ENCODE measurements at regions of chr6 and their contacts with region 1.

Region 1: DNA sequence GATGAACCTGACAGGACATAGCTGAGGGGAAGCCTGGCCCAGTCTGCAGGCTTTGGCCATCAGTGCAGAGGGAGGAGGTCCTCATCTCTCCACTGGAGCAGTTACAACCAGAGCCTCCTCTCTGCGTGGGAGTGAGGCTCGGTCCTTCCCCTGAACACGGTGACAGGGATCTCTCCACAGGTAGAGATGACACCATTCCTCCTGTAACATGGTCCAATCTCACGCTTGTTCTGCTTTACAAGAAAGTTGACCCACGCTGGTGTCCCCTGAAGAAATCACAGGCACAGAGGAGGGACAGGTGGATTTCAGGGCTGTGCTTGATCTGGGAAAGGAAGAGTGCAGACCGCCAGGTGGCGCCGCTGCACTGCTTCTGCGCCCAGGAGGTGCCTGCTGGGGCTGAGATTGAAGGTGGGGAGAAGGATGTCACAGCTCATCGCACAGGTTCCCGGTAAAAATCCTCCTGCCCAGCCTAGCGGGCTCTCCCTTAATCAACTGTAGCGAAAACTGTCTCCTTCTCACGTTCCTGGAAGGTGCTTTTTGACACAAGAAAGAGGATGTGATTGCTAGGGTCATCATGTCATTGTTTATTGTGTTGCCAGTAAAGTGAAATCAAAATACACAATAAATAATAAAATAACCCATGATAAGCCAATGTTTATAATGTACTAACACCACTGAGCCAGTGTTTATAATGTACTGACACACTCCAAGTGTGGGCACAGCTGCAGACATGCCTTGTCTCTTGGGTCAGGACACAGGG is 20.4 kb downstream of the HLA-G start:
- DNase-seq: peak; percentile 76
- ATAC-seq: peak; percentile 84
- H3K4me3 Mint-ChIP-seq: no peak overlapping the region
- H3K27ac Mint-ChIP-seq: peak overlapping the region; percentile 35
- H3K4me1 Mint-ChIP-seq: peaks cover 8% of the 10 kb centered on the region
- H3K27me3 Mint-ChIP-seq: peaks cover 50% of the 10 kb centered on the region
- CTCF ChIP-seq: peak; percentile 67

Region 2: DNA sequence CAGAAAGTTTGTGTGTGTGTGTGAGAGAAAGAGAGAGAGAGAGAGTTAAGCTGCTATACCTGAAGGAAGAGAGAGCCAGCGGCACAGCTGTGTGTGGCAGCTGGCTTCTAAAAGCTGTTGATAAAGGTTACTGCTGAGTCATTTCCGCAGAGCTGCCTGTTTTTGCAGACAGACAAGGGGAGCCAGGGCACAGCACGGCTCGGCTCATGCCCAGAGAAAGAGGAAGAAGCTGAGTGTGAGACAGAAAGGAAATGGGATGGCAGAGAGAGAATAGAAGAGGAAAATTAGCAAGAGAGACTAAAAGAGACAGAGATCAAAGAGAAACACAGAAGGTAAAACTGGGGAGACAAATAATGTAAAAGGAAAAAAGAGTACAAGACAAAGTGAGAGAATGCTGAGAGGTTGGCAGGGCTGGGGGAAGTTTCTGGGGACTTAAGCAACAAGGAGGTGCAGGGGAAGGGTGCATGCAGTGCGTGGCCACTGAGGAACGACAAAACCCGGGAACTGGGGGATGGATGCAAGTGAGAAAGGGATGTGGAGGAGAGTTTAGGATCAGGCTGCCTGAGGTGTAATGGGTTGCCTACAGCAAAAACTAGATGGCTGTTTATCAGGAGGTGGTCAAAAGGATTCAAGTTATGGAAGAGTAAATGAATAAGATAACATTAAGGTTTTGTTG is 117.0 kb after region 1 on chr6:
- CTCF ChIA-PET with region 1: interaction called, 44 read pairs
- POLR2A ChIA-PET with region 1: interaction called, 5 read pairs
- intact Hi-C with region 1: loop called (anchors 1 kb)
- DNase-seq: peak; percentile 53
- ATAC-seq: peak; percentile 97
- H3K4me3 Mint-ChIP-seq: peak overlapping the region; percentile 82
- H3K27ac Mint-ChIP-seq: peak overlapping the region; percentile 92
- H3K4me1 Mint-ChIP-seq: peaks cover 53% of the 10 kb centered on the region
- H3K27me3 Mint-ChIP-seq: no peaks in the 10 kb centered on the region
- CTCF ChIP-seq: no peak

Region 3: DNA sequence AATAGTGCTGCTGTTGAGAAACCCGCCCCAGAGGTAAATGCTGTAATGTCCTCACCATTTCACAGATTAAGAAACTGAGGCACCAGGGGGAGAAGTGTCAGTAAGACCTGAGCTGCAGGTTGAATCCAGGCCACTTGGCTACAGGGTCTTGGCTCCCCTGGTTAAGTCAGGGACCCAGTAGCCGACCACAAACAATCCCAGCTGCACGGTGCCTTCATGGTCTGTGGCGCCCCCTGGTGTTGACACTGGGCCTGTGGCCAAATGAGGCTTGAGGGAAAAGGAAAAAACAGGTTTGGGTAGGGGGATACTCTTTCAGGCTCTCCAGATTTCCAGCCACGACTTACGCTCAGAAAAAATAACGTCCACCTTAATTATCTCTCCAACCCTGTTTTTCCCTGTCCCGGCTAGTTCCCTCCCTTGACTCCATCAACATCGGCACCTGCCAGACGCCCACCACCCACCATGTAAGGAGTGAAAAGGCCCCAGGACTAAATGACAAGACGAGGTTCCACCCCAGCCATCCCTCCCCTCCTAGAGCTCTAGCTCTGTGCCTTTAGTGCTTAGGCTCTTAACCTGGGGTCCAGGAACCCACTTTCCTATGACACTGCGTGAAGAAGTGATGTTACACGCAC is 165.4 kb after region 1 on chr6:
- CTCF ChIA-PET with region 1: interaction called, 61 read pairs
- POLR2A ChIA-PET with region 1: no interaction called
- intact Hi-C with region 1: loop called (anchors 1 kb)
- DNase-seq: no peak
- ATAC-seq: peak; percentile 70
- H3K4me3 Mint-ChIP-seq: no peak overlapping the region
- H3K27ac Mint-ChIP-seq: no peak overlapping the region
- H3K4me1 Mint-ChIP-seq: no peaks in the 10 kb centered on the region
- H3K27me3 Mint-ChIP-seq: no peaks in the 10 kb centered on the region
- CTCF ChIP-seq: peak; percentile 53

Region 4: GRCh38 chr6:30130887-30131862 is 283.1 kb after region 1 on chr6:
- CTCF ChIA-PET with region 1: interaction called, 19 read pairs
- POLR2A ChIA-PET with region 1: no interaction called
- intact Hi-C with region 1: loop called (anchors 1 kb)
- DNase-seq: no peak
- ATAC-seq: peak; percentile 89
- H3K4me3 Mint-ChIP-seq: no peak overlapping the region
- H3K27ac Mint-ChIP-seq: no peak overlapping the region
- H3K4me1 Mint-ChIP-seq: peaks cover 15% of the 10 kb centered on the region
- H3K27me3 Mint-ChIP-seq: peaks cover 62% of the 10 kb centered on the region
- CTCF ChIP-seq: peak; percentile 83

Region 5: DNA sequence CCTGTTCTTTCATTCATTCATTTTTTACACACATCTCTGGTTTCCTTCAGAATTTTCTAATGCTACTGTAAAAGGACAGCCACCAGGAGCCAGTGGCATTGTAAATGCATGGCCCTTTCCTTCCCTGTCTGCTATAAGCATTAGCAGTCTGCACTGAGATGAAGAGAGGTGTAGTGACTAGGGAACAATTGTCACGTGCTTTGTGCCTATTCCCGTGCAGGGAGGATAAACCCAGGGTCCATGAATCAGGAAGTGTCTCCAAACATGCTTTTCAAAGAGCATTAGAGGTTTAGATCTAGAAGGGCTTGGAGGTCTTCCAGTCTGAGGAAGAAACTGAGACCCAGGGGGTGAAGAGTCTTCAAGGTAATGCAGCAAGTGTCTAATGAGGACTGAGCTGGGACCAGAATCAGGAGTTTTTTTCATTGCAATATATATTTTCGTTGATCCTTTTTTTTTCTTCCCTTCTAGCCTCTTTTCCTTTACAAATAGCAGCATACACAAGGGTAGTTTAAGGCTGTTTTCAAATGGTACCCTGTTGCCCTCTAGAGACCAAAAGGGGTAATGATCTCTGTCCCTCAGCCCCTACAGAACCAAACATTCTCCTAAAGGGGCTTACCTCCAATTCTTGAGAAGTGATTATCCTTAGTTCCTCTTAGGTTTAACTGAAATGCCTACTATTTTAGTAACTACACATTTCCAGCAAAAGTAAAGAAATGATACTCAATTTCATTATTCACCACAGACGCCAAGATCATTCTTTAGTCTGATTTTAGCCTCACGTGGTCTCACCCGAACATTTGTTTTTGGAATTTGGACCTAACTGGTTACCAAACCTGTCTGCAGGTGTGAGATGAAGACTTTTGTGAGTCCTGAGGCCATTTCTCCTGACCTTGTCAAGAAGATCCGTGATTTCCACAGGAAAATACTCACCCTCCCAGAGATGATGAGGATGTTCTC is 321.9 kb after region 1 on chr6:
- CTCF ChIA-PET with region 1: no interaction called
- POLR2A ChIA-PET with region 1: no interaction called
- intact Hi-C with region 1: loop called (anchors 2 kb)
- DNase-seq: no peak
- ATAC-seq: peak; percentile 71
- H3K4me3 Mint-ChIP-seq: no peak overlapping the region
- H3K27ac Mint-ChIP-seq: no peak overlapping the region
- H3K4me1 Mint-ChIP-seq: peaks cover 8% of the 10 kb centered on the region
- H3K27me3 Mint-ChIP-seq: peaks cover 52% of the 10 kb centered on the region
- CTCF ChIP-seq: no peak